ENCODE measurements at regions of chr11 and their contacts with region 1.

Region 1: GRCh38 chr11:72413914-72414628 is 20.3 kb downstream of the CLPB start:
- DNase-seq: peak; percentile 86
- H3K4me3 Mint-ChIP-seq: no peak overlapping the region
- H3K27ac Mint-ChIP-seq: no peak overlapping the region
- H3K4me1 Mint-ChIP-seq: peaks cover 22% of the 10 kb centered on the region
- H3K27me3 Mint-ChIP-seq: no peaks in the 10 kb centered on the region
- CTCF ChIP-seq: peak; percentile 80

Region 2: GRCh38 chr11:72352859-72353551 is 61.1 kb before region 1 on chr11:
- CTCF ChIA-PET with region 1: interaction called, 14 read pairs
- intact Hi-C with region 1: loop called (anchors 2 kb)
- DNase-seq: no peak
- H3K4me3 Mint-ChIP-seq: no peak overlapping the region
- H3K27ac Mint-ChIP-seq: no peak overlapping the region
- H3K4me1 Mint-ChIP-seq: no peaks in the 10 kb centered on the region
- H3K27me3 Mint-ChIP-seq: no peaks in the 10 kb centered on the region
- CTCF ChIP-seq: no peak

Measured in Calu3 (cell line).